ENCODE measurements at regions of chr10 and their contacts with region 1.

Region 1: GRCh38 chr10:133329491-133330202 is 7.0 kb downstream of the CALY start:
- DNase-seq: peak; percentile 48 to 64
- ATAC-seq: peak; percentile 89 to 95
- H3K4me3 ChIP-seq: peak overlapping the region; percentile 18 to 42 (median 25)
- H3K27ac ChIP-seq: no peak overlapping the region
- H3K4me1 ChIP-seq: peaks cover 0 to 6% of the 10 kb centered on the region in 2 donors
- H3K27me3 ChIP-seq: peaks cover 62 to 79% (median 69%) of the 10 kb centered on the region in 3 donors
- CTCF ChIP-seq: peak; percentile 83 to 97 (median 86)
- POLR2A ChIP-seq: no peak

Region 2: GRCh38 chr10:133520155-133520738 is 190.6 kb after region 1 on chr10:
- in situ Hi-C with region 1: no loop called
- intact Hi-C with region 1: loop called (anchors 10 kb)
- DNase-seq: peak; percentile 45 to 65
- ATAC-seq: peak; percentile 83 to 90
- H3K4me3 ChIP-seq: peak overlapping the region; percentile 54 to 60 (median 56)
- H3K27ac ChIP-seq: peak overlapping the region in 3 of 4 donors; percentile 5 to 39 (median 32)
- H3K4me1 ChIP-seq: no peaks in the 10 kb centered on the region
- H3K27me3 ChIP-seq: peaks cover 0 to 5% (median 0%) of the 10 kb centered on the region in 3 donors
- CTCF ChIP-seq: peak; percentile 63 to 88 (median 79)
- POLR2A ChIP-seq: no peak

Measured in gastrocnemius medialis (tissue), 4 donors.